B cell (primary cell): ENCODE measurements at regions of chr7 and their contacts with region 1.

Region 1: DNA sequence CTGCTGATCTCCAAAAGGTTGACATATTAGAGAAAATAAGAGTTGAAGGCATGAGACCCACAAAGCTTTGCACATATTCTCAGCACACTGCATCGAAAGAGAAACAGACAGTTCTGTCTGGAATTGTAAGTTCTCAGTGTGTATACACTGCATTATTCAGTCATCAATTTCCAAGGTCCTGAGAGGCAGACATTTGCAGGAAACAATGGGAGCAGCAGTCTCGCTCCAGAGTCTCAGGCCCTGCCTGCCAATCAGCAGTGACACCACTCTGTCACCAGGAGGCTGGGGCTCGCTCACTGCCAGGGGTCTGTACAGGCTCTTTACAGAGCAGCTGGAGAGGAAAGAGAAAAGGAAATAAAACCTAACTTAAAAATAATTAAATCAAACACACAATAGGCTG is 36.3 kb downstream of the JAZF1 start:
- DNase-seq: peak; percentile 39
- ATAC-seq: no peak
- H3K4me3 ChIP-seq: peak overlapping the region in 1 of 5 experiments; percentile 16
- H3K4me3 Mint-ChIP-seq: no peak overlapping the region
- H3K27ac ChIP-seq: no peak overlapping the region
- H3K27ac Mint-ChIP-seq: peak overlapping the region; percentile 53
- H3K4me1 ChIP-seq: peaks cover 21 to 31% of the 10 kb centered on the region in 2 donors
- H3K4me1 Mint-ChIP-seq: peaks cover 58% of the 10 kb centered on the region
- H3K27me3 ChIP-seq: no peaks in the 10 kb centered on the region
- H3K27me3 Mint-ChIP-seq: no peaks in the 10 kb centered on the region
- CTCF ChIP-seq: peak; percentile 34

Region 2: GRCh38 chr7:28130277-28130676 is 14.0 kb before region 1 on chr7:
- CTCF ChIA-PET with region 1: interaction called, 4 read pairs
- POLR2A ChIA-PET with region 1: no interaction called
- intact Hi-C with region 1: loop called (anchors 2 kb)
- DNase-seq: no peak
- ATAC-seq: no peak
- H3K4me3 ChIP-seq: no peak overlapping the region
- H3K4me3 Mint-ChIP-seq: no peak overlapping the region
- H3K27ac ChIP-seq: no peak overlapping the region
- H3K27ac Mint-ChIP-seq: no peak overlapping the region
- H3K4me1 ChIP-seq: peaks cover 43 to 62% of the 10 kb centered on the region in 2 donors
- H3K4me1 Mint-ChIP-seq: peaks cover 70% of the 10 kb centered on the region
- H3K27me3 ChIP-seq: no peaks in the 10 kb centered on the region
- H3K27me3 Mint-ChIP-seq: no peaks in the 10 kb centered on the region
- CTCF ChIP-seq: no peak

Region 3: DNA sequence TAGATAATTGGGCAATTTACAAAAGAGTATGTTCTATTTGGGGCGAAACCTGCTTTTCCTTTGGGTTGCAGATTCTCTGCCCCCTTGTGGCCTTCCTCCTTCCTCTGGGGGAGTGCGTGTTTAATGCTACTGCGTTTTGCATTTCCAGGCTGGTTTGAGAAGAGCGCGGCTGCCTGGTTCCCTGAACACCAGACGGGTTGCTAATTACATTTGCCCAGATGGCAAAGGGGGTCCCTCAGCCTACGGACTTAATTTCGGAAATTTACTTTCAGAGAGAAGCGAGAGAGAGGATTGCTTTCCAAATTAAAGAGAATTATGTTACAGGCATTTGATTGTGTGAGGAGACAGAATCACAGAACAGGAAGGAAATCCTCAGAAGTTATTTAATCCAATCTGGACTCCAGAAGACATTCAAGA is 128.2 kb after region 1 on chr7:
- CTCF ChIA-PET with region 1: interaction called, 4 read pairs
- POLR2A ChIA-PET with region 1: no interaction called
- intact Hi-C with region 1: loop called (anchors 2 kb)
- DNase-seq: peak; percentile 76
- ATAC-seq: peak; percentile 68
- H3K4me3 ChIP-seq: peak overlapping the region in 3 of 5 experiments; percentile 13 to 51 (median 27)
- H3K4me3 Mint-ChIP-seq: peak overlapping the region; percentile 60
- H3K27ac ChIP-seq: no peak overlapping the region
- H3K27ac Mint-ChIP-seq: no peak overlapping the region
- H3K4me1 ChIP-seq: peaks cover 14 to 22% of the 10 kb centered on the region in 2 donors
- H3K4me1 Mint-ChIP-seq: peaks cover 25% of the 10 kb centered on the region
- H3K27me3 ChIP-seq: no peaks in the 10 kb centered on the region
- H3K27me3 Mint-ChIP-seq: no peaks in the 10 kb centered on the region
- CTCF ChIP-seq: peak; percentile 80